ENCODE measurements at regions of chr16 and their contacts with region 1.

Region 1: GRCh38 chr16:15777533-15778203 is 79.2 kb downstream of the MYH11 start:
- DNase-seq: peak; percentile 86
- H3K4me3 ChIP-seq: no peak overlapping the region
- H3K27ac ChIP-seq: no peak overlapping the region
- H3K4me1 ChIP-seq: peaks cover 14% of the 10 kb centered on the region
- CTCF ChIP-seq: peak; percentile 88

Region 2: GRCh38 chr16:15732416-15732815 is 45.3 kb before region 1 on chr16:
- CTCF ChIA-PET with region 1: no interaction called
- POLR2A ChIA-PET with region 1: no interaction called
- intact Hi-C with region 1: no loop called
- DNase-seq: no peak
- H3K4me3 ChIP-seq: no peak overlapping the region
- H3K27ac ChIP-seq: no peak overlapping the region
- H3K4me1 ChIP-seq: no peaks in the 10 kb centered on the region
- CTCF ChIP-seq: no peak

Region 3: GRCh38 chr16:15822957-15823356 is 45.3 kb after region 1 on chr16:
- CTCF ChIA-PET with region 1: no interaction called
- POLR2A ChIA-PET with region 1: interaction called, 3 read pairs
- intact Hi-C with region 1: loop called (anchors 1 kb)
- DNase-seq: no peak
- H3K4me3 ChIP-seq: no peak overlapping the region
- H3K27ac ChIP-seq: no peak overlapping the region
- H3K4me1 ChIP-seq: no peaks in the 10 kb centered on the region
- CTCF ChIP-seq: no peak

Region 4: GRCh38 chr16:15932939-15933338 is 155.3 kb after region 1 on chr16:
- CTCF ChIA-PET with region 1: no interaction called
- POLR2A ChIA-PET with region 1: no interaction called
- intact Hi-C with region 1: loop called (anchors 10 kb)
- DNase-seq: no peak
- H3K4me3 ChIP-seq: no peak overlapping the region
- H3K27ac ChIP-seq: no peak overlapping the region
- H3K4me1 ChIP-seq: no peaks in the 10 kb centered on the region
- CTCF ChIP-seq: no peak

Measured in OCI-LY7 (cell line).